ENCODE measurements at regions of chr3 and their contacts with region 1.

Region 1: GRCh38 chr3:146218880-146219866 is 31.7 kb downstream of the PLSCR4 start:
- DNase-seq: peak in 2 of 3 donors; percentile 33 to 61
- ATAC-seq: no peak
- H3K4me3 ChIP-seq: no peak overlapping the region
- H3K4me1 ChIP-seq: peaks cover 25% of the 10 kb centered on the region
- CTCF ChIP-seq: peak; percentile 23

Region 2: GRCh38 chr3:146269271-146269670 is 50.1 kb after region 1 on chr3:
- intact Hi-C with region 1: no loop called
- DNase-seq: no peak
- ATAC-seq: no peak
- H3K4me3 ChIP-seq: no peak overlapping the region
- H3K4me1 ChIP-seq: no peaks in the 10 kb centered on the region
- CTCF ChIP-seq: no peak

Region 3: DNA sequence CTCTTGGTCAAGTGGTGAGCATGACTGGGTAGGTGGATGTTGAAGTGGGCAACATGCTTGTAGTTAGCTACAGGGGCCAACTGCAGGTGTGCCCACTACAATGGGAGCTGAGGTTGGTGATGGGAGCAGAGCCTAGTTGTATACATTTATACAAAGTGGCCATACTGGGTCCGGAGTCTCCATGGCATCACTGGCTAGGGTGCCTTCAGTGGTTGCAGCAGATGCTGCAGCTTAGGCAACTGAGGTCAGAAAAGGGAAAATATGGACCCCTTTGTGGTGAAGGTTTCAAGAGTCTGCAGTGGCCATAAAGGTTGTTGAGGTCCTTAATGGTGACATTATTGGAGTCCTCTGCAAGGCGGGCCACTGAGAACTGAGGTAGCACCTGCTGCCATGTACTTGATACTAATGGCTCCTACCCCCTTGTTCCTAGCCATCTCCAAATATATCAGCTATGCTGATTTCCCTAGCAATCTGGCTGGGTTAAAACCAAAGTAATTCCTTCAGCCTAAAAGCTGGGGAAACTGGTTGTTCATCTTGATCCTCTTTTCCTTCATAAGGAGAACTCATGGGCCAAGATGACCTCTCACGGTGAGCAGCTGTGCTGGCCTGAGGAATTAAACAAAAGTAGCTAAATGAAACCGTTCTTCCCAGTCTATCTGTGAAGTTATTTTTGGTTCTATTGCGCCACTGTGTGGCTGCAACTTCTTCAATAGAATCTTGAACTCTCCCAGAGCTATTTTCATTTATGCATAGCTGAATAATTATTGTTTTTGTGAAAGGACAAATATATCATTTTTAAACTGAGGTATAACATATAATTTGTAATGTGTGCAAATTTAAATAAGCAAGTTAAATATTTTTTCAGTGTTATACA is 107.7 kb after region 1 on chr3:
- intact Hi-C with region 1: loop called (anchors 2 to 5 kb)
- DNase-seq: peak in 1 of 3 donors; percentile 79
- ATAC-seq: peak; percentile 79
- H3K4me3 ChIP-seq: no peak overlapping the region
- H3K4me1 ChIP-seq: no peaks in the 10 kb centered on the region
- CTCF ChIP-seq: no peak

Region 4: DNA sequence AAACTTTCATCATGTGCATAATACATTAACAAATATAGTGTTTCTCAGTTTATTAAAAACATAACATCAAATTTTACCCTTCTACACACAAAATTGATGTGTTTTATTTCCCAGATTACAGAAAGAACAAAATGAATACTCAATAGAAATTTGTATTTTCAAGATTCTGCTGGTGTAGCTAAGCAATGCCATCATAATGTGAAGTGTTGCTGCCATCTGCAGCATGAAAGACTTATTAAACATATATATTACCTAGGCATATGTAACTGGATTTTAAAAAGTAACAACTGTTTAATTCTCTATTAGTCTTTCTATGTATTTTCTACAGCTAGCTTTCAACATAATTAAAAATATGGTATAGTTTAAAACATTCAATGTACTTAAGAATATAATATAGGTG is 358.5 kb after region 1 on chr3:
- intact Hi-C with region 1: loop called in 1 of 2 experiments (anchors 10 kb)
- DNase-seq: peak in 1 of 3 donors; percentile 72
- ATAC-seq: peak; percentile 66
- H3K4me3 ChIP-seq: no peak overlapping the region
- H3K4me1 ChIP-seq: no peaks in the 10 kb centered on the region
- CTCF ChIP-seq: no peak